Activated CD4-positive, alpha-beta T cell treated with anti-CD3 and anti-CD28 coated beads for 36 hours (primary cell): ENCODE measurements at regions of chr1 and their contacts with region 1.

Region 1: GRCh38 chr1:26145041-26145959 is 13.6 kb upstream of the FAM110D start:
- DNase-seq: peak; percentile 89
- ATAC-seq: peak; percentile 89
- H3K4me3 Mint-ChIP-seq: no peak overlapping the region
- H3K27ac Mint-ChIP-seq: no peak overlapping the region
- H3K4me1 Mint-ChIP-seq: peaks cover 6% of the 10 kb centered on the region
- H3K27me3 Mint-ChIP-seq: peaks cover 2% of the 10 kb centered on the region

Region 2: GRCh38 chr1:26035959-26036755 is 109.1 kb before region 1 on chr1:
- CTCF ChIA-PET with region 1: interaction called, 20 read pairs
- POLR2A ChIA-PET with region 1: no interaction called
- intact Hi-C with region 1: loop called (anchors 1 to 5 kb)
- DNase-seq: peak; percentile 86
- ATAC-seq: peak; percentile 76
- H3K4me3 Mint-ChIP-seq: peak overlapping the region; percentile 80
- H3K27ac Mint-ChIP-seq: peak overlapping the region; percentile 78
- H3K4me1 Mint-ChIP-seq: peaks cover 13% of the 10 kb centered on the region
- H3K27me3 Mint-ChIP-seq: peaks cover 6% of the 10 kb centered on the region

Region 3: DNA sequence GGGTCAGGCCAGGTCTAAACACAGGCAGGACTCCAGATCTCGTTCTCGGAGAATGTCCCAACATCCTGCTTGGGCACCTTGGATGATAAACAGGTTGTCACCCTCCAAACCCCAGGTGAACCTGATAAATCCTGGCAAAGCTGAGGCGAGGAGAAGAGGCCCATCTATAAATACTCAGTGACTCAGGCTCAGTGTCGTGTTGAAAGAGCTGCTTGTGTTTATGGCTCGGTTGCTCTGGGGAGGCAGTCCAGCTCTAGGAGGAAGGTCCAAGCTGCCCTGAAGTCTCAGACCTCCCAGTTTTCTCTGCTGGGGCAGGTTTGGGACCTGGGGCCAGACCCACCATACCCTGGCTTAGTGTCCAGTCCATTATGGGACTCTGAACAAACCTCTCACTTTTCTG is 62.1 kb before region 1 on chr1:
- CTCF ChIA-PET with region 1: interaction called, 11 read pairs
- POLR2A ChIA-PET with region 1: no interaction called
- intact Hi-C with region 1: no loop called
- DNase-seq: no peak
- ATAC-seq: no peak
- H3K4me3 Mint-ChIP-seq: no peak overlapping the region
- H3K27ac Mint-ChIP-seq: no peak overlapping the region
- H3K4me1 Mint-ChIP-seq: no peaks in the 10 kb centered on the region
- H3K27me3 Mint-ChIP-seq: peaks cover 17% of the 10 kb centered on the region

Region 4: GRCh38 chr1:26102526-26102925 is 42.8 kb before region 1 on chr1:
- CTCF ChIA-PET with region 1: interaction called, 187 read pairs
- POLR2A ChIA-PET with region 1: interaction called, 3 read pairs
- intact Hi-C with region 1: loop called (anchors 1 kb)
- DNase-seq: no peak
- ATAC-seq: no peak
- H3K4me3 Mint-ChIP-seq: no peak overlapping the region
- H3K27ac Mint-ChIP-seq: no peak overlapping the region
- H3K4me1 Mint-ChIP-seq: peaks cover 7% of the 10 kb centered on the region
- H3K27me3 Mint-ChIP-seq: no peaks in the 10 kb centered on the region

Region 5: GRCh38 chr1:26126321-26127084 is 18.8 kb before region 1 on chr1:
- CTCF ChIA-PET with region 1: interaction called, 134 read pairs
- POLR2A ChIA-PET with region 1: interaction called, 3 read pairs
- intact Hi-C with region 1: loop called in 1 of 2 experiments (anchors 1 kb)
- DNase-seq: peak; percentile 52
- ATAC-seq: peak; percentile 88
- H3K4me3 Mint-ChIP-seq: peak overlapping the region; percentile 58
- H3K27ac Mint-ChIP-seq: peak overlapping the region; percentile 86
- H3K4me1 Mint-ChIP-seq: peaks cover 51% of the 10 kb centered on the region
- H3K27me3 Mint-ChIP-seq: no peaks in the 10 kb centered on the region

Region 6: GRCh38 chr1:26161415-26162219 is 16.3 kb after region 1 on chr1:
- CTCF ChIA-PET with region 1: interaction called, 19 read pairs
- POLR2A ChIA-PET with region 1: interaction called, 3 read pairs
- intact Hi-C with region 1: no loop called
- DNase-seq: peak; percentile 67
- ATAC-seq: peak; percentile 47
- H3K4me3 Mint-ChIP-seq: peak overlapping the region; percentile 39
- H3K27ac Mint-ChIP-seq: no peak overlapping the region
- H3K4me1 Mint-ChIP-seq: peaks cover 10% of the 10 kb centered on the region
- H3K27me3 Mint-ChIP-seq: peaks cover 15% of the 10 kb centered on the region